ENCODE measurements at regions of chr19 and their contacts with region 1.

Region 1: DNA sequence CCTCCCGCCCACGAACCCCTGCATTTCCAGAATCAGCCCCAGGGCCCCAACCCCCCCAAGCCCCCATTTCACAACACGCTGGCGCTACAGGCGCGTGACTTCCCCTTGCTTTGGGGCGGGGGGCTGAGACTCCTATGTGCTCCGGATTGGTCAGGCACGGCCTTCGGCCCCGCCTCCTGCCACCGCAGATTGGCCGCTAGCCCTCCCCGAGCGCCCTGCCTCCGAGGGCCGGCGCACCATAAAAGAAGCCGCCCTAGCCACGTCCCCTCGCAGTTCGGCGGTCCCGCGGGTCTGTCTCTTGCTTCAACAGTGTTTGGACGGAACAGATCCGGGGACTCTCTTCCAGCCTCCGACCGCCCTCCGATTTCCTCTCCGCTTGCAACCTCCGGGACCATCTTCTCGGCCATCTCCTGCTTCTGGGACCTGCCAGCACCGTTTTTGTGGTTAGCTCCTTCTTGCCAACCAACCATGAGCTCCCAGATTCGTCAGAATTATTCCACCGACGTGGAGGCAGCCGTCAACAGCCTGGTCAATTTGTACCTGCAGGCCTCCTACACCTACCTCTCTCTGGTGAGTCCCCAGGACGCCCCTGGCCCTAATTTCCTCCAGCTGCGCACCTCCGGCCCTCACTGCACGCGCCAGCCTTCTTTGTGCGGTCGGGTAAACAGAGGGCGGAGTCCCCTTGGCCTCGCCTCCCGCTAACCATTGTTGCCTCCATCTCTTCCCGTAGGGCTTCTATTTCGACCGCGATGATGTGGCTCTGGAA is at the start of gene FTL:
- DNase-seq: peak; percentile 98
- H3K4me3 ChIP-seq: peak within 1 kb of the TSS; percentile 89
- H3K27ac ChIP-seq: peak within 1 kb of the TSS; percentile 76
- H3K4me1 ChIP-seq: no peaks in the 10 kb centered on the region
- H3K27me3 ChIP-seq: no peaks in the 10 kb centered on the region
- CTCF ChIP-seq: no peak
- total RNA-seq, gene FTL: 1,463 to 1,600 TPM

Region 2: DNA sequence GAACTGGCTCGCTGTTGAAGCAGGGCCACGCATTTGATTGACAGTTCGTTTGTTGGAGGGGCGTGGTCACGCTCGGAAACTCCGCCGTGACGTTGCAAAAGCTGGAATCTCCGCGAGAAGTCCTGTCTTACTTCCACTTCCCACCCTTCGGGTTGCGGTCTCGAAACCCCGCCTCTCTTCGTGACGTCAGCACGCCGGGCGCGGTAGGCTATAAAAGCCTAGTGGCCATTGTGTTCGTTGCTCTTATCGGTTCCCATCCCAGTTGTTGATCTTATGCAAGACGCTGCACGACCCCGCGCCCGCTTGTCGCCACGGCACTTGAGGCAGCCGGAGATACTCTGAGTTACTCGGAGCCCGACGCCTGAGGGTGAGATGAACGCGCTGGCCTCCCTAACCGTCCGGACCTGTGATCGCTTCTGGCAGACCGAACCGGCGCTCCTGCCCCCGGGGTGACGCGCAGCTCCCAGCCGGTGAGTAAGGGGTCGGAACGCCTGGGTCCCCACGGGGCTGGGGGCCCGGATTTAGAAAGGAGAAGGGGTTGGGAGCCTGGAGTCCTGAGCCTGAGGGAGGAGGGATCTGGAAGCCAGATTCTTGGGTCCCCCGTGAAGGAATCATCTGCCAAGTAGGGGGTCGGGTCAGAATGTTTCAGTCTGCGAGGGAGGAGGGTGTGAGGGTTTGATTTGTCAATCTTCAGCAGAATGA is 92.9 kb before region 1 on chr19 and contains the start of gene PPP1R15A:
- intact Hi-C with region 1: loop called (anchors 10 kb)
- DNase-seq: peak; percentile 99
- H3K4me3 ChIP-seq: peak within 1 kb of the TSS; percentile 63
- H3K27ac ChIP-seq: peak within 1 kb of the TSS; percentile 97
- H3K4me1 ChIP-seq: peaks cover 15% of the 10 kb centered on the region
- H3K27me3 ChIP-seq: no peaks in the 10 kb centered on the region
- CTCF ChIP-seq: no peak
- total RNA-seq, gene PPP1R15A: 23.9 to 33.3 TPM

Measured in colonic mucosa (tissue), 4 donors.